IMR-90 (cell line): ENCODE measurements at regions of chr14 and their contacts with region 1.

Region 1: GRCh38 chr14:76761136-76761959 is at the start of gene VASH1:
- DNase-seq: peak; percentile 76
- ATAC-seq: peak; percentile 92
- H3K4me3 ChIP-seq: peak within 1 kb of the TSS; percentile 87
- H3K27ac ChIP-seq: peak within 1 kb of the TSS; percentile 80
- H3K4me1 ChIP-seq: peaks cover 8% of the 10 kb centered on the region; the same call in 1 of the 2 replicates
- H3K27me3 ChIP-seq: no peaks in the 10 kb centered on the region; the same call in 1 of the 2 replicates
- CTCF ChIP-seq: 0 out of 2 replicates have a peak, but pooled peaks have one; percentile 6
- POLR2A ChIP-seq: no peak
- RAD21 ChIP-seq: no peak
- total RNA-seq, gene VASH1: 1.9 and 2.0 TPM in 2 replicates

Region 2: DNA sequence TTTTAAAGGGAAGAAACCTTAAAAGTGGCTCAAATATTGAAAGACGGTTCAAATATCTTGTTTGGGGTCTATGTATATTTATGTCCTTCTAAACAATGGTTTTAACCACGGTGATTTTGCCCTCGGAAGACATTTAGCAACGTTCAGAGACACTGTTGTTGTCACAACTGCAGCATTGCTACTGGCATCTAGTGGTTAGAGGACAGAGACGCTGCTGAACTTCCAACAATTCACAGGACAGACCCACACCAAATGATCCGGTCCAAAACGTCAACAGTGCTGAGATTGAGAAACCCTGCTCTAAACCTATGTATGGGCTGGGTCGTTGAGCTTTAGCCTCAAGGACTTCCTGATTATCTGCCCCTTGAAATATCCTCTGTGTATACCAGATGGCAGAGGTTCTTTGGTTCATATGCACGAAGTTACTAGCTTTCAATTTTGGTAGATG is 49.6 kb after region 1 on chr14:
- CTCF ChIA-PET with region 1: no interaction called
- POLR2A ChIA-PET with region 1: no interaction called
- dilution Hi-C with region 1: no loop called
- in situ Hi-C with region 1: no loop called
- intact Hi-C with region 1: loop called (anchors 1 kb)
- DNase-seq: peak; percentile 34
- ATAC-seq: peak; percentile 57
- H3K4me3 ChIP-seq: peak overlapping the region; percentile 22; the same call in 1 of the 2 replicates
- H3K27ac ChIP-seq: no peak overlapping the region
- H3K4me1 ChIP-seq: no peaks in the 10 kb centered on the region
- H3K27me3 ChIP-seq: no peaks in the 10 kb centered on the region
- CTCF ChIP-seq: peak; percentile 51
- POLR2A ChIP-seq: no peak
- RAD21 ChIP-seq: peak; percentile 57

Region 3: DNA sequence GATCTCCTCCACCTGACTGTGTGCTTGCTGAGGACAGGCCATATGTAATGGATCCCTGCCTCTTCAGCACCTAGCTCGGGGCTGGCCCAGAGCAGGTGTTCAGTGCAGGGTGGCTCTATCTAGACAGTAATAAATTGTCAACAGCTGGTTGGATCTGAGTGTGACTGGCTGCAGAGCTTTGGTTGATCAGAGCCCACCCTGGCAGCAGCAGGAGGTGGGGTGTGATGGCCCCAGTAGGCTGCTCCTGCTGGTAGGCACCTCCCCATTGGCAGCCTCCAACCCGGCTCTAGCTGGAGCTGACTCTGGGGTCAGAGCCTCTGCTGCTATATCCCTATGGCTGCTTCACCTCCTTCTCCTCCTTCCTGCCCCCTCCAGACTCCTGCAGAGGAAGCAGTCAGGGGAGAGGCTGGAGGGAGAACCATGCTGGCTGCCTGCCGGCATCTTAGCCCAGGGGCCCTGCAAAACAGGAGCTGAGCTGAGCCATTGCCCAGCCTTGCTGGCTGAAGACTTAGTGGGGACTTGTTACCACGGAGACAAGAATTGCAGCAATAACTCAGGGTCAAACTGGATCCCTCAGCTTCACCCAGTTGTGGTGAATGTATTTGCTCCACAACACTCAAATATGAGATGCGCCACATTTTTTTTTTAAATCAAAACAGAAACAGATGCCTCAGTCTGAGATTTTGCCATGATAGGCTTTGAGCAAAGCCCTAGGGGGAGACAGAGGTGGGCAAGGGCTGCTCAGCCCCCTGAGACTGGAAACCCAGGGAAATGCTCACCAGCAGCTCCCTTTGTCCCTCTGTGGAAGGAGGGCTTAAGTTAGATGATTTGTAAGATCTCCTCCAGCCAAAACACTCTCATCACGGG is 442.5 kb after region 1 on chr14:
- CTCF ChIA-PET with region 1: no interaction called
- POLR2A ChIA-PET with region 1: no interaction called
- dilution Hi-C with region 1: no loop called
- in situ Hi-C with region 1: no loop called
- intact Hi-C with region 1: no loop called
- DNase-seq: no peak
- ATAC-seq: no peak
- H3K4me3 ChIP-seq: no peak overlapping the region
- H3K27ac ChIP-seq: no peak overlapping the region
- H3K4me1 ChIP-seq: no peaks in the 10 kb centered on the region
- H3K27me3 ChIP-seq: peaks cover 10% of the 10 kb centered on the region; the same call in 1 of the 2 replicates
- CTCF ChIP-seq: no peak
- POLR2A ChIP-seq: no peak
- RAD21 ChIP-seq: no peak